WTC11 (cell line): ENCODE measurements at regions of chr12 and their contacts with region 1.

Region 1: DNA sequence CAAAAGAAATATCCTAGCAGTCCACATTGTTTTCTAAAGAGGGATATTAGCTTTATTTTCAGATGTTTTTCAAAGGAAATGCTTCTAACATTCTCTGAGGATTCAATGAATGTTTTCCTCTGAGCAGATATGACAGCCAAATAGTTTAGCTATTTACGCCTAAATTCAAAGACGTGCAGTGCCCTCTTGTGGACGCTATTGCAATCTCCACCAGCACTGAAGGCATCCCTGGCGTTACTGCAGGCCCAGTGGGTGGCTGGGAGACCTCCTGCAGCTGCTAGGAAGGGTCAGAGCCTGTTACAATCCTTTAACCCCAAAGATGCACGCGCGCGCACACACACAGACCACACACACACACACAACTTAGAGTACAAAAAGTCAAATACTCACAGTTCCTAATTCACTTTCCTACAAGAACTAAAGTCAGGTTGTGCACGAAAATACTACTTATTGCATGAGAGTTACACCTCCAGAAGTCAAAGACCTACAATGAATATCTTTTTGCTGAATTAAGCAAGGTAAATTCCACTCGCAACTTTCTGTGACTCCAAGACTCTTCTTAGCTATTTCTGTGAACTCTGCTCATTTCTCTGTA is 589.3 kb upstream of the TMEM132C start:
- DNase-seq: peak; percentile 78
- ATAC-seq: peak; percentile 89
- H3K4me3 Mint-ChIP-seq: no peak overlapping the region
- H3K27ac Mint-ChIP-seq: no peak overlapping the region
- H3K4me1 Mint-ChIP-seq: peaks cover 9% of the 10 kb centered on the region
- H3K27me3 Mint-ChIP-seq: peaks cover 3% of the 10 kb centered on the region
- CTCF ChIP-seq: peak; percentile 47; the same call in 1 of the 2 replicates

Region 2: DNA sequence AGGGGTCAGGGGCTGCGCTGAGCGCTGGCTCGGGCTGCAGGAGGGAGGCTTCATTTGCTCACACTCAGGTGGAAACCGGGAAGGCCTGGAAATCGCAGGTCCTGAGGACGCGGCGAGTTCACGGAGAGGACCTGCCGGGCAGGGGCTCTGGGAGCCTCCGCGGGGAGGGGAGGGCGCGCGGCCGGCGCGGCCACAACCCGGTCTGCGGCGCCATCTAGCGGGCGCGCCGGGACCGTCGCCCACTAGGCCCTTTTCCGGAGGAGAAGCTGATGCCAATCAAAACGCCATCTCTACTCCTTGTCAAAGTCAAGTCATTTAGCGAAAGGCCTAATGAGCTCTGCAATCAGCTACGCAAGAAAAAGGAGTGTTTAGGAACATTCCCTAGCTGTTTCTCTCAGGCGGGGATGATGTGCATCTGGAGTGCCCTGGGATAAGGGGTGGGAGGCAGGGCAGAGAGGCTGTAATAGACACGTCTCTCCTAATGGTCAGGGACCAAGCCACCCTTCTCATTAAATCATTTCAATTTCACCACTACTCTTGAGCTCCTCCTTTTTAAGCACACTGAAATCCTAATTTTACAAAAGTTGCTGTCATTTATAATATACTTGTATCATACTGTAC is 296.5 kb before region 1 on chr12:
- CTCF ChIA-PET with region 1: interaction called, 11 read pairs
- POLR2A ChIA-PET with region 1: no interaction called
- DNase-seq: peak; percentile 64
- ATAC-seq: peak; percentile 90
- H3K4me3 Mint-ChIP-seq: no peak overlapping the region
- H3K27ac Mint-ChIP-seq: no peak overlapping the region
- H3K4me1 Mint-ChIP-seq: no peaks in the 10 kb centered on the region
- H3K27me3 Mint-ChIP-seq: peaks cover 3% of the 10 kb centered on the region
- CTCF ChIP-seq: peak; percentile 70

Region 3: DNA sequence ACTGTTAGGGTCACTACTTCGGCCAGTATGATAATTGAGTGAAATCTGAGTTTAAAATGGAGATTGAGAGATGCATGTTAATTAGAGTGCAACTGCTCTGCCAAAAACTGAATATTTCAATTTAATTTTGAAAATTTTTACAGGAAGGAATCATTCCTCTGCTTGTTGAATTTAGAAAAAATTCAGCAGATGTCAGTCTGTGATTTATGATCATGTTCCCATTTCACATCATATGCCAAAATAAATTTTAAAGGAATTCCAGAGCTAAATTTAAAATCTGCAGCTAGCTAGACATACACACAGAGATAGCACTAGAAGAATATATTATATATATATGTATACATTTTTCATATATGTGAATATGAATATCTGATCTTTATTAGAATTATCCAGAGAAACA is 208.3 kb before region 1 on chr12:
- CTCF ChIA-PET with region 1: no interaction called
- POLR2A ChIA-PET with region 1: no interaction called
- DNase-seq: no peak
- ATAC-seq: no peak
- H3K4me3 Mint-ChIP-seq: no peak overlapping the region
- H3K27ac Mint-ChIP-seq: no peak overlapping the region
- H3K4me1 Mint-ChIP-seq: no peaks in the 10 kb centered on the region
- H3K27me3 Mint-ChIP-seq: peaks cover 12% of the 10 kb centered on the region
- CTCF ChIP-seq: no peak

Region 4: DNA sequence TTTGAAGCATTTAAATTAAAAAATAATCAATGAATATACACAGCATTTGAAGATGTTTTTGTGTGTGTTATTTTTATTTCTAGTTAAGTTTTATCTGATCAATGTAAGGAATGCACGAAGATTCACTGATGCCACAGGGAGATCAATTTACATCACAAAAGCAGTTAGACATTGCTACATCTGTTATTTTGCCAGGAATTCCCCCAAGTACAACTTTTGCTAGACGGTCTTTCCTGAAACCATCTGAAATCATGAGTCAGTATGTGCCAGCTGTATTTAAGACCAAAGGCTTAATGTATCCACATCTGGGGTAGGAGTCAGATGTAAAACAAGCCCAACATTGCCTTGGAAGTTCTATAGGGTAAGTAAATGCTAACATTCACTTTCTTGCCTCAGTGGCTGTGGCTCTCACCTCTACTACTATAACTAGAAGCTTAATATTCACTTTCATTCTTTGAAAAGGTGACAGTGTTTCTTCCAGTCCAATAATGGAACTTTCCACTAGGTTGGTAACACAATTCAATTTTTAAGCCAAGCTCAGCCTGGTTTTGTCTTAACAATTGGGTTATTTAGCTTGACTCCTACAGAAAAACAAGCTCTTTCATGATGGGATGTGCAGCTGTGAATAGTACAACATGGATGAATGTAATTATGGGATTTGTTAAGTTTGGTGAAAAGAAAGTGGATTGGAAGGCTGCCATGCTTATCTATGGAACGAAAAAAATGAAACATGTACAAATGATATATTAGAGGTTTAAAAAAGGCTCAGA is 203.9 kb after region 1 on chr12:
- CTCF ChIA-PET with region 1: no interaction called
- POLR2A ChIA-PET with region 1: no interaction called
- DNase-seq: no peak
- ATAC-seq: no peak
- H3K4me3 Mint-ChIP-seq: no peak overlapping the region
- H3K27ac Mint-ChIP-seq: no peak overlapping the region
- H3K4me1 Mint-ChIP-seq: no peaks in the 10 kb centered on the region
- H3K27me3 Mint-ChIP-seq: peaks cover 3% of the 10 kb centered on the region
- CTCF ChIP-seq: no peak